ENCODE measurements at regions of chr10 and their contacts with region 1.

Region 1: DNA sequence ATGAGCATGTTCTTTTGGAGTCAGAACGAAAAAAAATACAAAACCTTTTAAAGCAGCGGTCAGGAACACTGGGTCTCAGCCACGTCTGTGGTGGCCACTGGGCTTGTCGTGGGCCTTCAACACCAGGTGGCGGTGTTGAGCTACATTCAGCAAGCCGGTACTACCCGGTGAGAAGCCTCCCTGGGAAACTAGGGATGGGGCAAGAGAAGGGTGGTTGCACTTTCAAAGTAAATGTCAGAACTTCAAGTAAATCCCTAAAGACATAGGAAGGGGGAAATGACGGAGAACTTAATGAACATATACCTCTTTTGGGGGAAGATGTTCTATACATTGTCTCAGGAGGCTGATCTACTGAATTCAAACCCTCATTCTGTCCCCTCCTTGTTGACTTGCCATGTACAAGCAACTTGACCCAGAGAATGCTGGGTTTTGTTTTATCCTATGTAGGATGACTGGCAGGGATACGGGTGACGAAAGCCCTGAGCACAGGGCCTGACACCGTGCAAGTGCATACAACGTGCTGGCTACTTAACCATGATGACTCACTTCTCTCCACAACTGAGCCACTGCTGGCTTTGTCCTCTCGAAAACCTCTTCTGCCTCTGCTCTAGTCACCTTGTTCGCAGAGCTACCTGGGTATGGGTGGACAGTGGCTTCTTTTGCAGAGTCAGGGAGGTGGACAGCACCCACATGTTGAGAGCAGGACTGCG is 49.0 kb upstream of the BAMBI start:
- DNase-seq: peak; percentile 82 to 88 (median 87)
- ATAC-seq: peak; percentile 96
- H3K4me3 ChIP-seq: no peak overlapping the region
- H3K27ac ChIP-seq: no peak overlapping the region
- H3K4me1 ChIP-seq: no peaks in the 10 kb centered on the region; a peak in 1 of 5 replicates
- H3K27me3 ChIP-seq: peaks cover 15 to 48% of the 10 kb centered on the region in 2 experiments; a peak in 4 of 5 replicates
- CTCF ChIP-seq: peak; percentile 92 to 93 (median 92)
- EP300 ChIP-seq: no peak
- POLR2A ChIP-seq: no peak
- RAD21 ChIP-seq: peak; percentile 91 to 97

Region 2: DNA sequence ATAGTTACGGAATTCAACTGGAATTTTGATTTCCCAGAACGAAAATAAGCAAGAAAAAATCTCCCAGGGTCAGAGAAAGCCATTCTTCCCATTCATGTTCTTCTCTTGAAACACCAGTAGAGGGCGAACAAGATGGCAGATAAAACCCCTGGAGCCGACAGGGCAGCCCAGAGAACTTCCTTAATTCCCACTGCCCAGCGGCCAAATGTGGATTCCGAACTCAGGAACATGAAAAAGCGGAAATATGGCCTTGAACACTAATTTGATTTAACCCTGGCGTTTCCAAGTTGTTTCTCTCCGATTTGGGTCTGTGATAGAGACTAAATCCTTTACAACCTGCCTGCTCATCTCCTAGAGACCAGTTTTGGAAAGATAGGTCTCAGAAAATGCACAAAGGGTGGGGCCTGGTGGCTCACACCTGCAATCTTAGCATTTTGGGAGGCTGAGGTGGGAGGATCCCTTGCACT is 196.1 kb before region 1 on chr10:
- CTCF ChIA-PET with region 1: no interaction called
- POLR2A ChIA-PET with region 1: no interaction called
- in situ Hi-C with region 1: no loop called
- intact Hi-C with region 1: loop called (anchors 10 kb)
- DNase-seq: peak; percentile 63 to 75 (median 71)
- ATAC-seq: peak; percentile 81
- H3K4me3 ChIP-seq: no peak overlapping the region
- H3K27ac ChIP-seq: no peak overlapping the region
- H3K4me1 ChIP-seq: peaks cover 0 to 2% of the 10 kb centered on the region in 2 experiments; a peak in 2 of 5 replicates
- H3K27me3 ChIP-seq: peaks cover 5 to 11% of the 10 kb centered on the region in 2 experiments
- CTCF ChIP-seq: peak; percentile 77 to 83 (median 83)
- EP300 ChIP-seq: no peak
- POLR2A ChIP-seq: no peak
- RAD21 ChIP-seq: peak; percentile 76 to 84

Region 3: DNA sequence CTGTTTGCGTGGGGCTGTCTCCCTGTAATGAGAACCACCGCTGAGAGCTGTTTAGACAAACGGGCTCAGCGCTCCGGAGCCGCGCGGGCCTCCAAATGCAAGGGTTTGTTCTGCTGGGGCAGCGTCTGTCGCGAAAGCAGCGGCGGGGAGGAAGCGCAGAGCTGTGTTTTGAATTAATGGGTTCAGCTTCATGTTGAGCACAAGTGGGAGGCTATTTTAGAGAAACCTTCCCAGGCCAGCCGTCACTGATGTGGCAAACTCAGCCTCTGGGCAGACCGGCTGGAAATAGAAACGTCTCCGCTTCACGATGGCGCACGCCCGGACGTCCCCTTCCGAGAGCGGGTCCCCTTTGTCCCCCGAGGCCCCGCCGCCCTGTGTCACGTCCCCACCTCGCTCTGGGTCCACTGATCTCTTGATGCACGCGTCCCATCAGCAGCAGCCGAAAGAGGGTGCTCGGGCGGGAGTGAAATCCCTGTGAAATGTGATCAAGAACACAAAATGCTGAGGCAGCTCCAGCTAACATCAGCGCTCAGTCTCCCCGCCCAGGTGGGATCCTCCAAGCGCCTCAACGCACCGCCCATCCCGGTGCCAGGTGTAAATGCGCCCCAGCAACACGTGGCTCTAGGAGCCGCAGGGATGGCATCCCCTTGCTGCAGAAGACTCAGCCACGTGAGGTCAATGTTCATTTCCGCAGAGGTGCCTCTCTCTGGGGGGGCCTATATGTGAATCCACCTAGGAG is 93.9 kb after region 1 on chr10:
- CTCF ChIA-PET with region 1: no interaction called
- POLR2A ChIA-PET with region 1: no interaction called
- in situ Hi-C with region 1: no loop called
- intact Hi-C with region 1: no loop called
- DNase-seq: no peak
- ATAC-seq: no peak
- H3K4me3 ChIP-seq: no peak overlapping the region
- H3K27ac ChIP-seq: no peak overlapping the region
- H3K4me1 ChIP-seq: peaks cover 7% of the 10 kb centered on the region in 2 experiments; a peak in 3 of 5 replicates
- H3K27me3 ChIP-seq: no peaks in the 10 kb centered on the region
- CTCF ChIP-seq: no peak
- EP300 ChIP-seq: no peak
- POLR2A ChIP-seq: no peak
- RAD21 ChIP-seq: no peak

Region 4: DNA sequence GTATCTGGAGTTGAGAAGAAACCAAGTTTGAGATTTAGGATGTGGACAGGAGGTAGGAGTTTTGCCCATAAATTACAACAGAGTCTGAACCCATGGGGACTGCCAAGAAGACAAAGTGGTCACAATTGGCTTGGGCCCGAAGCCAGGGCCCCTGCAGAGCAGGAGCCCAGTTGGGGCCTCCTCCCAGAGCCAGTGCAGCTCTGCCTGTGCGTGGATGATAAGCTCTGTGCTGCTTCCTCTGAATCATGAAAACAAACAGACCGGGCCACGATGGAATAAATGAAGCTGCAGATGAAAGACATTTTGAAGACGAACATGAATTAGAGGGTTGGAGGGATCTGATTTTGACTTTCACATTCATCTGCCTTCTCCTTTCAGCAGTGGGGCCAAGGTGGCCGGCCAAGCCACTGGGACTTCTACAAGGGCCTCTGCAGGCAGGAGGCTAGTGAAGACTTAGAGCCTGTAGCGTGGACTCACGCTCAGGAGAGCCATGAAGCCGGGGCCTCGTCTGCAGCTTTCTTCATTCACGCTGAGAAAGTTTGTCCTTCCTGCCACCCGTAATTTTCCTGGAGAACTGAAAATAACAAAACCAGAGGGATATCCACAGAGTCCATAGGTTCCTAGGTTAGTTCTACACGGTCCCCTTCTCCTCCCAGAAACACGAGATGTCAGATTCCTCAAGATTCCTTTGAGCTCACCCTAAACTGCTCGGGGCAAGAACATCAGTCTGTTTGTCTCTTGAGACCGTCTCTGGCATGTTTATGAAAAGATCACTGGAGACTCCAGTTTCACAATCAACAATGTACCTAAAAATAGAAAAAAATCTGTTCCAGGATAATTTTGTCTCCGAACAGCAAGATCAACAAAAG is 503.8 kb after region 1 on chr10:
- CTCF ChIA-PET with region 1: interaction called, 11 read pairs
- POLR2A ChIA-PET with region 1: interaction called, 3 read pairs
- in situ Hi-C with region 1: no loop called
- intact Hi-C with region 1: no loop called
- DNase-seq: peak; percentile 50 to 92 (median 74)
- ATAC-seq: peak; percentile 97
- H3K4me3 ChIP-seq: peak overlapping the region; percentile 4; the same call in 1 of the 2 replicates
- H3K27ac ChIP-seq: peak overlapping the region; percentile 70
- H3K4me1 ChIP-seq: peaks cover 15 to 29% of the 10 kb centered on the region in 2 experiments
- H3K27me3 ChIP-seq: no peaks in the 10 kb centered on the region
- CTCF ChIP-seq: no peak
- EP300 ChIP-seq: peak; percentile 91
- POLR2A ChIP-seq: no peak
- RAD21 ChIP-seq: peak; percentile 6 to 16; a peak in 1 of 4 replicates

Region 5: GRCh38 chr10:29304264-29305030 is 676.1 kb after region 1 on chr10:
- CTCF ChIA-PET with region 1: interaction called, 13 read pairs
- POLR2A ChIA-PET with region 1: no interaction called
- in situ Hi-C with region 1: loop called (anchors 10 kb)
- intact Hi-C with region 1: loop called (anchors 5 kb)
- DNase-seq: peak; percentile 63 to 67 (median 65)
- ATAC-seq: peak; percentile 80
- H3K4me3 ChIP-seq: no peak overlapping the region
- H3K27ac ChIP-seq: no peak overlapping the region
- H3K4me1 ChIP-seq: no peaks in the 10 kb centered on the region
- H3K27me3 ChIP-seq: peaks cover 8 to 18% of the 10 kb centered on the region in 2 experiments; a peak in 4 of 5 replicates
- CTCF ChIP-seq: peak; percentile 66 to 78 (median 76)
- EP300 ChIP-seq: no peak
- POLR2A ChIP-seq: no peak
- RAD21 ChIP-seq: peak; percentile 95

Measured in K562 (cell line).